Activated T-helper 2 cell treated with anti-CD3 and anti-CD28 coated beads, Interferon-gamma antibody, Interleukin-2, Interleukin-4, amounts not matched to agents 10 μg/mL and 5 μg/mL and 100 μg/mL, durations not matched to agents 14 hours and 24 hours and 36 hours (primary cell): ENCODE measurements at regions of chr14 and their contacts with region 1.

Region 1: DNA sequence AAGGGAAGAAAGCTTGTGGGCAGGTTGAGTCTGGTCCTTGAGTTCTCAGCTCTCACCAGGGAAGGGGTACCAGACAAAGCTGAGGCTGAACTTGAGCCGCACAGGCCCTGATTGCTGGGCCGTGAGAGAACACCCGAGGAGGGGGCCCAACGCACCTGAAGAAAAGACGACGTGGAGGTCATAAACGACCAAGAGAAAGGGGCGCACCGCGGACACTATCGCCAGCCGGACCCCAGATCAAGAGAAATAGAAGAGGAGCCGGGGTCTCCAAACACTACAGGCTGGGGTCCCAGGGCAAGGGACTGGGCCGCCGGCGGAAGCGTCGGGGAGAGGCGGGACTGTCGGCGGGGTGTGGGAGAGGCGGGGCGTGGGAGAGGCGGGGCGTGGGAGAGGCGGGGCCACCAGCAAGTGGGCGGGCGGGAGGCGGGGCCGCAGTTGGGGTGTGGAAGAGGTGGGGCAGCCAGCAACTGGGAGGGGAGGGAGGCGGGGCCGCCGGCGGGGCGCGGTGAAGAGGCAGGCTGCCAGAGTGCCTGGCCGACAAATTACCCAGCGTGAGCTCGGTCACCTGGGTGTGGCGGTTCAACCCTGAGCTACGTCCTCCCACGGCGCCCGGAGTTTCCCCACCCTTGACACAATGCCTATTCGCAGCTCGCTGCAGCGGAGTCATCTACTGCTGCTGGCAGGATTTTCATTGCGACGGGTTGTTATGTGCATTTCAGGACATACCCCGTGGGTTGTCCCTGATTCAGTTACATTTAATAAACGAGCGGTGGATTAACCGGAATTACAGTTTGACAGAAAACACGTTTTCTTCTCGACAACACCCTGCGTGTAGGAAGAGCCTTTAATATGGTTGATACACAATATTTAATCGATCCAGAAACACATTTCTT is 15.5 kb upstream of the NEMF start:
- DNase-seq: peak; percentile 94
- H3K4me3 Mint-ChIP-seq: peak overlapping the region; percentile 91
- H3K27ac Mint-ChIP-seq: peak overlapping the region; percentile 94
- H3K4me1 Mint-ChIP-seq: peaks cover 22% of the 10 kb centered on the region
- H3K27me3 Mint-ChIP-seq: no peaks in the 10 kb centered on the region

Region 2: GRCh38 chr14:49820176-49820575 is 47.9 kb before region 1 on chr14:
- intact Hi-C with region 1: no loop called
- DNase-seq: no peak
- H3K4me3 Mint-ChIP-seq: no peak overlapping the region
- H3K27ac Mint-ChIP-seq: no peak overlapping the region
- H3K4me1 Mint-ChIP-seq: peaks cover 1% of the 10 kb centered on the region
- H3K27me3 Mint-ChIP-seq: no peaks in the 10 kb centered on the region

Region 3: GRCh38 chr14:49879683-49880204 is 11.7 kb after region 1 on chr14:
- intact Hi-C with region 1: loop called (anchors 1 kb)
- DNase-seq: peak; percentile 45
- H3K4me3 Mint-ChIP-seq: no peak overlapping the region
- H3K27ac Mint-ChIP-seq: peak overlapping the region; percentile 42
- H3K4me1 Mint-ChIP-seq: peaks cover 30% of the 10 kb centered on the region
- H3K27me3 Mint-ChIP-seq: no peaks in the 10 kb centered on the region

Region 4: DNA sequence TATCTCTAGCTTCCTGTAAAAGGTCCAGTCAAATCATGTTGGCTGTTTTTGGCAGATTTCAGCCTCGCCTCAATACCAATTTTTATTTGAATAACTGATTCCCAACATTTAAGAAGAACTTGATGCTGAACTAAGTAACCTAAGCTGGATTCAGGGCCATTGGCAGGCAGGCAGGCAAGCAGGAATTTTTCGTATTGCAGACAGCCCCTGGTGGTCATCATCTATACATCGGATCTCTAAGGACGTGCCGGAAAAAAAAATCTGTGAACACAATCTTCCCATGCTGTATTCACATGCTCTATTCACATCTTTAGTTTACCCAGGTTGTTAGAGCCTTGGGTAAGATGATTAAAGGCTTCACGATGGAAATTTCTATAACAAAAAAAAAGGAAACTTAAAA is 241.3 kb after region 1 on chr14:
- intact Hi-C with region 1: loop called (anchors 1 kb)
- DNase-seq: no peak
- H3K4me3 Mint-ChIP-seq: no peak overlapping the region
- H3K27ac Mint-ChIP-seq: no peak overlapping the region
- H3K4me1 Mint-ChIP-seq: peaks cover 20% of the 10 kb centered on the region
- H3K27me3 Mint-ChIP-seq: no peaks in the 10 kb centered on the region

Region 5: DNA sequence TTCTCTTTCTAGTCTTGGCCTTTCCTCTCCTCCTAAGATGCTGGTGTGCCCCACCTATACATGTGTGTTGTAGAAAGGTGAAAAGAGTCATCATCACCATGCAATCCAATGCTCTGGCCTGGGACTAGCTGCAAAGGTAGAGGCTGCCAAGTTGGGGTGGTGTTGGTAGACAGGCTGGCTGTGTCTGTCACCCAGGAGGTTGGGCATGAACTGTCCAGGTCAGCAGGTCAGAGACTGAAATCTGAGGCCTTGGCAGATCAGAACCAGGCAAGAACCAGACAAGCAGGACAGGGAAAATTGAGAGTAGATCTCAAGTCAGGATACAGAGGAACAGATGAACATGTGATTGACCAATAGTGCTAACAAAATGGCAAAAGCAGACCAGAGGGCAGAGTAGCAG is 417.8 kb after region 1 on chr14:
- intact Hi-C with region 1: no loop called
- DNase-seq: no peak
- H3K4me3 Mint-ChIP-seq: no peak overlapping the region
- H3K27ac Mint-ChIP-seq: no peak overlapping the region
- H3K4me1 Mint-ChIP-seq: no peaks in the 10 kb centered on the region
- H3K27me3 Mint-ChIP-seq: no peaks in the 10 kb centered on the region

Region 6: GRCh38 chr14:50311975-50312733 is 444.1 kb after region 1 on chr14 and contains the starts of genes DMAC2L and L2HGDH:
- intact Hi-C with region 1: loop called (anchors 5 kb)
- DNase-seq: peak; percentile 89
- H3K4me3 Mint-ChIP-seq: peak within 1 kb of the TSS; percentile 91
- H3K27ac Mint-ChIP-seq: peak within 1 kb of the TSS; percentile 98
- H3K4me1 Mint-ChIP-seq: peaks cover 47% of the 10 kb centered on the region
- H3K27me3 Mint-ChIP-seq: no peaks in the 10 kb centered on the region
- total RNA-seq, gene DMAC2L: 13.6 and 16.2 TPM in 2 replicates
- total RNA-seq, gene L2HGDH: 14.1 and 14.2 TPM in 2 replicates

Region 7: GRCh38 chr14:50830932-50831725 is 963.1 kb after region 1 on chr14 and contains the start of gene NIN:
- intact Hi-C with region 1: loop called (anchors 10 kb)
- DNase-seq: peak; percentile 68
- H3K4me3 Mint-ChIP-seq: peak within 1 kb of the TSS; percentile 91
- H3K27ac Mint-ChIP-seq: peak within 1 kb of the TSS; percentile 87
- H3K4me1 Mint-ChIP-seq: peaks cover 47% of the 10 kb centered on the region
- H3K27me3 Mint-ChIP-seq: peaks cover 13% of the 10 kb centered on the region
- total RNA-seq, gene NIN: 43.0 and 45.1 TPM in 2 replicates